ENCODE measurements at regions of chr7 and their contacts with region 1.

Region 1: GRCh38 chr7:44581879-44582603 is at the start of gene TMED4:
- DNase-seq: peak; percentile 100
- H3K4me3 ChIP-seq: peak within 1 kb of the TSS; percentile 96
- H3K4me3 Mint-ChIP-seq: peak within 1 kb of the TSS; percentile 86 to 96 (median 90)
- H3K27ac ChIP-seq: peak within 1 kb of the TSS; percentile 99
- H3K27ac Mint-ChIP-seq: peak within 1 kb of the TSS; percentile 96 to 98 (median 97)
- H3K4me1 ChIP-seq: peaks cover 21% of the 10 kb centered on the region
- H3K4me1 Mint-ChIP-seq: peaks cover 19 to 49% (median 35%) of the 10 kb centered on the region in 3 donors
- H3K27me3 ChIP-seq: no peaks in the 10 kb centered on the region
- H3K27me3 Mint-ChIP-seq: peaks cover 0 to 3% of the 10 kb centered on the region in 2 donors
- total RNA-seq, gene TMED4: 78.8 to 80.5 TPM

Region 2: GRCh38 chr7:44383566-44383965 is 198.5 kb before region 1 on chr7:
- CTCF ChIA-PET with region 1: no interaction called
- POLR2A ChIA-PET with region 1: no interaction called
- DNase-seq: no peak
- H3K4me3 ChIP-seq: no peak overlapping the region
- H3K4me3 Mint-ChIP-seq: no peak overlapping the region
- H3K27ac ChIP-seq: no peak overlapping the region
- H3K27ac Mint-ChIP-seq: no peak overlapping the region
- H3K4me1 ChIP-seq: no peaks in the 10 kb centered on the region
- H3K4me1 Mint-ChIP-seq: peaks cover 0 to 13% (median 9%) of the 10 kb centered on the region in 3 donors
- H3K27me3 ChIP-seq: no peaks in the 10 kb centered on the region
- H3K27me3 Mint-ChIP-seq: no peaks in the 10 kb centered on the region

Region 3: GRCh38 chr7:44615149-44615611 is 33.1 kb after region 1 on chr7:
- CTCF ChIA-PET with region 1: no interaction called
- POLR2A ChIA-PET with region 1: no interaction called
- DNase-seq: no peak
- H3K4me3 ChIP-seq: no peak overlapping the region
- H3K4me3 Mint-ChIP-seq: peak overlapping the region in 6 of 7 donors; percentile 13 to 63 (median 43)
- H3K27ac ChIP-seq: no peak overlapping the region
- H3K27ac Mint-ChIP-seq: peak overlapping the region; percentile 61 to 94 (median 88)
- H3K4me1 ChIP-seq: peaks cover 49% of the 10 kb centered on the region
- H3K4me1 Mint-ChIP-seq: peaks cover 60 to 82% (median 69%) of the 10 kb centered on the region in 3 donors
- H3K27me3 ChIP-seq: no peaks in the 10 kb centered on the region
- H3K27me3 Mint-ChIP-seq: no peaks in the 10 kb centered on the region

Region 4: DNA sequence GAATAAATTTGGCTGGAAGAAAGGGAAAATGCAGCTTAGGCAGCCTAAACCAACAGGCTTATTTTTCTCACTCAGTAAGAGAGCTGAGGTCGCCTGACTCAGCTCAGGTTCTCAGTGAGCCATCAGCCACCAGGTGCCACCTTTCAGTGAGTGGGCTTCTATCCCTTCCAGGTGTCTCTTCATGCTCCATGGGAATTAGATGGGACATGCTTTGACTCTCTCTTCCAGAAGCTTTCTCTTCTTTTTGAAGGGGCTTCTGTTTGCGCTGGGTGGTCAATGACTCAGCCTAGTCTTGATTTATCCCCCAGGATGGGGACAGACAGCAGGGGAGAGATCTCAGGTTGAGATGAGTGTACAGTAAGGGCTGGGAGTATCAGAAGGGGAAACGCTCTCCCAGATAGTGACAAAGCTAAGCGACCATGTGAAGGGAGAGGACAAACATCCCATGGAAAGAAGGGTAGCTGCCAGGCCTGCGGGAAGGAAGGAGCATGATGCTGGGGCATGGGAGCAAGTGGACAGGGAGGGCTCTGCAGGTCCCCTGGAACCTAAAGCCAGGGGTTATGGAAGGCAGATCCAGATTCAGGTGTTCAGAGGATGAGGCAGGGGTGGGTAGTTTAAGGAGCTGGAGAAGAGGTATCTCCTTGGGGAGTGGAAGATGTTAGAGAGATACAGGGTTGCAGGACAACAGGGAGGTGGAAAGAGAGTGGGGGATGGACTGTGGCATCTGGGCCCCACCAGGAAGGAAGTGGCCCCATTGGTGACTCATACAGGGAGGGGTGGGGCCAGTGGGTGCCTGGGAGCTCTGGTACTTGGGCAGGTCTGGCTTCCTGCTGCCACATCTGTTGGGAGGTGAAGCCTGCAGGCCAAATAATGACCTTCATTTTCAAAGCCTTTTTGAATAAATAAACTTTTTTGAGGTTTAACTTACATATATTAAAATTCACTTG is 56.8 kb after region 1 on chr7:
- CTCF ChIA-PET with region 1: interaction called, 7 read pairs
- POLR2A ChIA-PET with region 1: interaction called, 19 read pairs
- DNase-seq: peak; percentile 46 to 91 (median 76)
- H3K4me3 ChIP-seq: peak overlapping the region; percentile 24
- H3K4me3 Mint-ChIP-seq: peak overlapping the region; percentile 51 to 94 (median 87)
- H3K27ac ChIP-seq: peak overlapping the region; percentile 90
- H3K27ac Mint-ChIP-seq: peak overlapping the region; percentile 94 to 100 (median 100)
- H3K4me1 ChIP-seq: peaks cover 80% of the 10 kb centered on the region
- H3K4me1 Mint-ChIP-seq: peaks cover 80 to 90% (median 87%) of the 10 kb centered on the region in 3 donors
- H3K27me3 ChIP-seq: no peaks in the 10 kb centered on the region
- H3K27me3 Mint-ChIP-seq: peaks cover 0 to 2% of the 10 kb centered on the region in 2 donors

Measured in CD8-positive, alpha-beta memory T cell (primary cell).